Uterus (tissue), 4 donors: ENCODE measurements at regions of chr4 and their contacts with region 1.

Region 1: DNA sequence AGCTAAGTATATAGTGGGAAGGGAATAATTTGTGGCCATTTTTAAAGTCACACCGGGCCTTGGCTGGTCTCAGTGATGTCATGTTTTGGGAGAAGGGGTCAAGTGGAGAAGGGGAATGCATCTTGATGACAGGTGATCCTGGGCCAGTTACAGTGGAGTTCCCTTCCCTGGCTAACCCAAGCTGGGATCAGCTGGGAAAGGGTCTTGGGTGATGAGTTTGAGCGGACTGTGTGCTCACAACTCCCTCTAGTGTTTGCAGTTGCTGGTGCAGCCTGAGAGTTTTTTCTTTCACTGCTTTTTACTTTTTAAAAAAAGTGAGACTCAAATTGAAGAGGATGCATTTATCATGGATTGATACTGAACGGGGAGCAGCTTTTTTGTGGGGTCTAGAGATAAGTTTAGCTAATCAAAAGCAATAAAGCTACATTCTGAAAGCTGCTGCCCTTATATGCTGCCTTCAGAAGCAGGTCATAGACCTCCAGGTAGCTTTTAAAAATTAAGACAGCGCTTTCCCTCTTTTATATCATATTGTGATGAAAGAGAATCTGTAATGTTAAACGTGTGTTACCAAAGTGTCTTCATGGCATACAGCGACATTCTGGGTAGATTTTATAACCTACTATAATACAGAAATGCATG is 164.7 kb downstream of the DCLK2 start:
- DNase-seq: peak in 1 of 2 donors; percentile 23
- H3K4me3 ChIP-seq: no peak overlapping the region
- H3K27ac ChIP-seq: no peak overlapping the region
- H3K4me1 ChIP-seq: no peaks in the 10 kb centered on the region
- H3K27me3 ChIP-seq: no peaks in the 10 kb centered on the region
- CTCF ChIP-seq: peak; percentile 65 to 75 (median 70)
- POLR2A ChIP-seq: no peak

Region 2: DNA sequence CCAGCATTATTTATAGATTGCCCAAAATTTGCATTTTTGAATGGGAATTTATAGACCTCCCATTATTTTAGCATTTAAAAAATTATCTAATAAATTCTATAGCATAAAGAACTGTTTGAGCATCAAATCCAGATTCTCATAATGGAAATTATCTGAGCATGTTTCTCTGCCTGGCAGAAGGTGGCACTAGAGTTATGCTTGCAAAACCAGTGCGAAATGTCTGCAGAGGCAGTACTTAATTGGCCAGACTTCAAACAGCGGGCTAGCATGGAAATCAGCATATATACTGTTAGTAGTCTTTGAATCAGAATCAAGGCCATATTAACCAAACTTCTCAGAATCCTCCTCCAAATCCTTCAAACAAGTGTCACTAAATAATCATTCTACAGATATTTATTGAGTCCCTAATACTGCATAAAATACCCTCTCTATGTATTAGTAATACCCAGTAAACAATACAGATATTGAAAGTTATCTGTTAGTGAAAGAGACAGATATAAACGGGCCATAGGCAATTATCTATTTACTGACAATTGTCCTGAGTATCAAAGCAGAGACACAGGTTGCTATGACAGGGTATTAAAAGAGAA is 243.4 kb before region 1 on chr4:
- intact Hi-C with region 1: loop called (anchors 10 kb)
- DNase-seq: peak; percentile 16 to 42
- H3K4me3 ChIP-seq: no peak overlapping the region
- H3K27ac ChIP-seq: no peak overlapping the region
- H3K4me1 ChIP-seq: no peaks in the 10 kb centered on the region
- H3K27me3 ChIP-seq: no peaks in the 10 kb centered on the region
- CTCF ChIP-seq: peak; percentile 68 to 75 (median 73)
- POLR2A ChIP-seq: no peak

Region 3: DNA sequence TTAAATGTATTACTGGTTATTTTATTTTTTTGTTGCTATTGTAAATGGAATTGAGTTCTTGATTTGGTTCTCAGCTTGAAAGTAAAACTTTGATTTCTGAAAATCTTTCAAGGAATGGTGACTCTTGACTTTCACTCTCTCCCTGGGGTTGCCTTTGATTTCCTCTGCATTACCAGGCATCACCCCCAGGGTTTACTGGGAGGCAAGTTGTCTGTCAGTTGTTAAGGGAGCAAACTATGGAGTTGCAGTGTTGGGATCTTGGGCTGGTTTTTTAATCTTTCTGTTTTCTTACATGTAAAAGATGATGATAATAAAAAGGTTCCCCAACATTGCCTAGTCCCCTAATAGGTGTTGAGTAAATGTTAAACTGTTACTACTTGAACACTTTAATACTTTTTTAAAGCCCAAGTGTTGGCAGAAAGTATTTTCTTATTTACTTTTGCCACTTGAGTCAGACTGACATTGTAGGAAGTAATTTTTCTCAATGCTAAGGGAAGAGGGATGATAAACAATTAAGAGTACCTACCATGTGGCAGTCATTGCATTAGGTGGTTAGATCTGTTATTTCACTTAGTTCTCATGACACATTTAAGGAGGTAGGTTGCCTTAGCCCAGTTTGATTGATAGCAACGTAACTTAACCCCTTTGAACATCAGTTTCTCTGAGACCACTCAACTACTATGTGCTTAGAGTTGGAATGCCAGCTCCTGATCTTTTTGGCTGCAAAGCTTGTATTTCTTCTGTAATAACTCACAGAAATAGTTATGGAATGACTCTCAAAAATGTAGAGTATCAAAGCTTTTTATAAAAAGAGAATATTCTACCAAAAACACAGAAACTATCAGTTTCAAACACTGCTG is 97.6 kb before region 1 on chr4:
- intact Hi-C with region 1: no loop called
- DNase-seq: no peak
- H3K4me3 ChIP-seq: no peak overlapping the region
- H3K27ac ChIP-seq: no peak overlapping the region
- H3K4me1 ChIP-seq: peaks cover 0 to 2% of the 10 kb centered on the region in 2 donors
- H3K27me3 ChIP-seq: no peaks in the 10 kb centered on the region
- CTCF ChIP-seq: no peak
- POLR2A ChIP-seq: no peak